ENCODE measurements at regions of chr11 and their contacts with region 1.

Region 1: GRCh38 chr11:8033305-8034105 is 46.4 kb downstream of the EIF3F start:
- DNase-seq: peak; percentile 60 to 69
- H3K4me3 ChIP-seq: no peak overlapping the region
- H3K4me3 Mint-ChIP-seq: peak overlapping the region; percentile 16
- H3K27ac Mint-ChIP-seq: no peak overlapping the region
- H3K4me1 ChIP-seq: no peaks in the 10 kb centered on the region
- H3K4me1 Mint-ChIP-seq: no peaks in the 10 kb centered on the region
- H3K27me3 ChIP-seq: no peaks in the 10 kb centered on the region
- H3K27me3 Mint-ChIP-seq: peaks cover 21% of the 10 kb centered on the region
- CTCF ChIP-seq: peak; percentile 80 to 94

Region 2: GRCh38 chr11:8070417-8071115 is 37.1 kb after region 1 on chr11:
- CTCF ChIA-PET with region 1: interaction called, 4 read pairs
- POLR2A ChIA-PET with region 1: no interaction called
- intact Hi-C with region 1: loop called (anchors 1 kb)
- DNase-seq: peak in 1 of 2 experiments; percentile 33
- H3K4me3 ChIP-seq: no peak overlapping the region
- H3K4me3 Mint-ChIP-seq: no peak overlapping the region
- H3K27ac Mint-ChIP-seq: no peak overlapping the region
- H3K4me1 ChIP-seq: no peaks in the 10 kb centered on the region
- H3K4me1 Mint-ChIP-seq: no peaks in the 10 kb centered on the region
- H3K27me3 ChIP-seq: no peaks in the 10 kb centered on the region; the same call in 1 of the 2 replicates
- H3K27me3 Mint-ChIP-seq: peaks cover 14% of the 10 kb centered on the region
- CTCF ChIP-seq: peak; percentile 24 to 44

Region 3: GRCh38 chr11:8851316-8851715 is 817.8 kb after region 1 on chr11:
- CTCF ChIA-PET with region 1: no interaction called
- POLR2A ChIA-PET with region 1: no interaction called
- intact Hi-C with region 1: no loop called
- DNase-seq: no peak
- H3K4me3 ChIP-seq: no peak overlapping the region
- H3K4me3 Mint-ChIP-seq: no peak overlapping the region
- H3K27ac Mint-ChIP-seq: no peak overlapping the region
- H3K4me1 ChIP-seq: no peaks in the 10 kb centered on the region
- H3K4me1 Mint-ChIP-seq: peaks cover 10% of the 10 kb centered on the region
- H3K27me3 ChIP-seq: no peaks in the 10 kb centered on the region
- H3K27me3 Mint-ChIP-seq: no peaks in the 10 kb centered on the region
- CTCF ChIP-seq: no peak